GM12878 (cell line): ENCODE measurements at regions of chr16 and their contacts with region 1.

Region 1: DNA sequence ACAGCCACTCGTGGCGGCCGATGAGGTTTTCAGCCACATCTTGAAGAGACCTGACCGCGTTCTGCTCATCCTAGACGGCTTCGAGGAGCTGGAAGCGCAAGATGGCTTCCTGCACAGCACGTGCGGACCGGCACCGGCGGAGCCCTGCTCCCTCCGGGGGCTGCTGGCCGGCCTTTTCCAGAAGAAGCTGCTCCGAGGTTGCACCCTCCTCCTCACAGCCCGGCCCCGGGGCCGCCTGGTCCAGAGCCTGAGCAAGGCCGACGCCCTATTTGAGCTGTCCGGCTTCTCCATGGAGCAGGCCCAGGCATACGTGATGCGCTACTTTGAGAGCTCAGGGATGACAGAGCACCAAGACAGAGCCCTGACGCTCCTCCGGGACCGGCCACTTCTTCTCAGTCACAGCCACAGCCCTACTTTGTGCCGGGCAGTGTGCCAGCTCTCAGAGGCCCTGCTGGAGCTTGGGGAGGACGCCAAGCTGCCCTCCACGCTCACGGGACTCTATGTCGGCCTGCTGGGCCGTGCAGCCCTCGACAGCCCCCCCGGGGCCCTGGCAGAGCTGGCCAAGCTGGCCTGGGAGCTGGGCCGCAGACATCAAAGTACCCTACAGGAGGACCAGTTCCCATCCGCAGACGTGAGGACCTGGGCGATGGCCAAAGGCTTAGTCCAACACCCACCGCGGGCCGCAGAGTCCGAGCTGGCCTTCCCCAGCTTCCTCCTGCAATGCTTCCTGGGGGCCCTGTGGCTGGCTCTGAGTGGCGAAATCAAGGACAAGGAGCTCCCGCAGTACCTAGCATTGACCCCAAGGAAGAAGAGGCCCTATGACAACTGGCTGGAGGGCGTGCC is 30.1 kb downstream of the CIITA start:
- DNase-seq: no peak
- ATAC-seq: no peak
- H3K4me3 ChIP-seq: no peak overlapping the region
- H3K27ac ChIP-seq: no peak overlapping the region
- H3K4me1 ChIP-seq: peaks cover 7% of the 10 kb centered on the region
- H3K27me3 ChIP-seq: no peaks in the 10 kb centered on the region
- CTCF ChIP-seq: no peak
- EP300 ChIP-seq: no peak
- POLR2A ChIP-seq: no peak
- RAD21 ChIP-seq: no peak

Region 2: DNA sequence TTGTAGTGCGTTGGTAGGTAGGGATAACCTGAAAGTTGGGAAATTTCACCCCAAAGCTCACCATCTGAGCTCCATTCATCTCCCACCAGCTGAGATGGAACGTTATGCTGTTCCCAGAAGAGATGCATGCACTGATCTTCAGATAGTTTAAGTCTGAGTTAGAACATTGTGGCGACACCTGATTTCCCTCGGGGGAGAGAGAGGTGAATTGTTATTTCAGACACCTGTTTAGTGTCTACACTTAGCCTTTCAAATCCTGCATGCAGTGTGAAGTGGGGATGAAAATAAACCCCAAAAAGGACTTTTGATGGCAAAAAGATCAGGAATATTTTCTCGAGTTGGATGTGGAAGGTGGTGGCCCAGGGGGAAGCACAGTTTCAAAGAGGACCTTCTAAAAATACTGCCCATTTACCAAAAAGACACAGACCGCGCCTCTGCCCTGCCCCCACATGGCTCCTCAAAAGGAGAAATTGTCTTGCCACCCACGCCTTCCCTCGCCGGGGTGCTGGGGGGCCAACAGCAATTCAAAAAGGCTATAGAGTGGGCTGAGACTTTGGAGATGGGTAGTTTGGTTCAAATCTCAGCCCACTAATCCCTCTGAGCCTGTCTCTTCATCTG is 18.7 kb before region 1 on chr16:
- CTCF ChIA-PET with region 1: interaction called, 6 read pairs
- POLR2A ChIA-PET with region 1: interaction called, 10 read pairs
- RAD21 ChIA-PET with region 1: interaction called, 43 read pairs
- SMC1A ChIA-PET with region 1: interaction called, 49 read pairs
- in situ Hi-C with region 1: no loop called
- intact Hi-C with region 1: loop called (anchors 2 kb)
- DNase-seq: no peak
- ATAC-seq: peak; percentile 7; the same call in 1 of the 3 replicates
- H3K4me3 ChIP-seq: peak overlapping the region; percentile 67
- H3K27ac ChIP-seq: peak overlapping the region; percentile 59
- H3K4me1 ChIP-seq: peaks cover 96% of the 10 kb centered on the region
- H3K27me3 ChIP-seq: no peaks in the 10 kb centered on the region
- CTCF ChIP-seq: no peak
- EP300 ChIP-seq: no peak; a peak in 1 of 4 replicates
- POLR2A ChIP-seq: no peak
- RAD21 ChIP-seq: 0 out of 2 replicates have a peak, but pooled peaks have one; percentile 17

Region 3: DNA sequence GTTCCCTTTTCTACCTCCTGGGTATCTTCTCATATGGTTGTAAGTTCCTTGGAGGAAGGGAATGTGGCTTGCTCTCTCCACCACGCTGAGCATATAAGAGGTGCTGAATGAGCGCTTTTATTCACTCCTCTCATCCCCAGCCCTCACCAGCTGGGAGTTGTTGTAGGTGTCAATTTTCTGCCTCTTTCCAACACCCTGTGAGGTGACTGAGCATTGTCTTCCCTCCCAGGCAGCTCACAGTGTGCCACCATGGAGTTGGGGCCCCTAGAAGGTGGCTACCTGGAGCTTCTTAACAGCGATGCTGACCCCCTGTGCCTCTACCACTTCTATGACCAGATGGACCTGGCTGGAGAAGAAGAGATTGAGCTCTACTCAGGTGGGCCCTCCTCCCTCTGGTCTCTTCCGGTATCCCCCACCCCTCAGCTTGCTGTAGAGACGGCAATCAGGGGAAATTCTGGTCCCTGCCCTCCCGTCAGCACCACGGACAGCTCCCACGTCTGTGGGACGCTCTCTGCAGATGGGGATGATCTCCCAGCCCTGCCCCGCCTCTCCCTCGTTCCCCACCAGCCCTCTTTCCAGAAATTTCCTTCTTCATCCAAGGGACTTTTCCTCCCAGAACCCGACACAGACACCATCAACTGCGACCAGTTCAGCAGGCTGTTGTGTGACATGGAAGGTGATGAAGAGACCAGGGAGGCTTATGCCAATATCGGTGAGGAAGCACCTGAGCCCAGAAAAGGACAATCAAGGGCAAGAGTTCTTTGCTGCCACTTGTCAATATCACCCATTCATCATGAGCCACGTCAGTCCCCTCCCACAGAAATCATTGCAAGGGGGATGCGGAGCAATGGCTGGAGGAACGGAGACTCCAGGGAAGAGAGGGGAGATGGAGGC is 11.8 kb before region 1 on chr16:
- CTCF ChIA-PET with region 1: interaction called, 6 read pairs
- POLR2A ChIA-PET with region 1: interaction called, 24 read pairs
- RAD21 ChIA-PET with region 1: interaction called, 43 read pairs
- SMC1A ChIA-PET with region 1: interaction called, 49 read pairs
- in situ Hi-C with region 1: no loop called
- intact Hi-C with region 1: loop called (anchors 2 kb)
- DNase-seq: no peak
- ATAC-seq: no peak
- H3K4me3 ChIP-seq: no peak overlapping the region
- H3K27ac ChIP-seq: no peak overlapping the region
- H3K4me1 ChIP-seq: peaks cover 68% of the 10 kb centered on the region
- H3K27me3 ChIP-seq: no peaks in the 10 kb centered on the region
- CTCF ChIP-seq: no peak
- EP300 ChIP-seq: no peak
- POLR2A ChIP-seq: no peak
- RAD21 ChIP-seq: no peak

Region 4: GRCh38 chr16:11557801-11558200 is 650.7 kb after region 1 on chr16:
- CTCF ChIA-PET with region 1: no interaction called
- POLR2A ChIA-PET with region 1: no interaction called
- RAD21 ChIA-PET with region 1: no interaction called
- SMC1A ChIA-PET with region 1: no interaction called
- in situ Hi-C with region 1: no loop called
- intact Hi-C with region 1: no loop called
- DNase-seq: no peak
- ATAC-seq: no peak
- H3K4me3 ChIP-seq: no peak overlapping the region
- H3K27ac ChIP-seq: no peak overlapping the region
- H3K4me1 ChIP-seq: peaks cover 8% of the 10 kb centered on the region
- H3K27me3 ChIP-seq: no peaks in the 10 kb centered on the region
- CTCF ChIP-seq: no peak
- EP300 ChIP-seq: no peak
- POLR2A ChIP-seq: no peak
- RAD21 ChIP-seq: no peak